CD8-positive, alpha-beta T cell (primary cell): ENCODE measurements at regions of chr19 and their contacts with region 1.

Region 1: GRCh38 chr19:7197760-7198696 is 96.2 kb downstream of the INSR start:
- DNase-seq: peak; percentile 80 to 98 (median 89)
- ATAC-seq: peak; percentile 83
- H3K4me3 ChIP-seq: peak overlapping the region; percentile 67 to 76
- H3K4me3 Mint-ChIP-seq: peak overlapping the region; percentile 90
- H3K27ac ChIP-seq: peak overlapping the region; percentile 73
- H3K27ac Mint-ChIP-seq: peak overlapping the region; percentile 95
- H3K4me1 ChIP-seq: peaks cover 17% of the 10 kb centered on the region
- H3K4me1 Mint-ChIP-seq: peaks cover 14% of the 10 kb centered on the region
- H3K27me3 ChIP-seq: no peaks in the 10 kb centered on the region
- H3K27me3 Mint-ChIP-seq: peaks cover 2% of the 10 kb centered on the region
- CTCF ChIP-seq: no peak

Region 2: DNA sequence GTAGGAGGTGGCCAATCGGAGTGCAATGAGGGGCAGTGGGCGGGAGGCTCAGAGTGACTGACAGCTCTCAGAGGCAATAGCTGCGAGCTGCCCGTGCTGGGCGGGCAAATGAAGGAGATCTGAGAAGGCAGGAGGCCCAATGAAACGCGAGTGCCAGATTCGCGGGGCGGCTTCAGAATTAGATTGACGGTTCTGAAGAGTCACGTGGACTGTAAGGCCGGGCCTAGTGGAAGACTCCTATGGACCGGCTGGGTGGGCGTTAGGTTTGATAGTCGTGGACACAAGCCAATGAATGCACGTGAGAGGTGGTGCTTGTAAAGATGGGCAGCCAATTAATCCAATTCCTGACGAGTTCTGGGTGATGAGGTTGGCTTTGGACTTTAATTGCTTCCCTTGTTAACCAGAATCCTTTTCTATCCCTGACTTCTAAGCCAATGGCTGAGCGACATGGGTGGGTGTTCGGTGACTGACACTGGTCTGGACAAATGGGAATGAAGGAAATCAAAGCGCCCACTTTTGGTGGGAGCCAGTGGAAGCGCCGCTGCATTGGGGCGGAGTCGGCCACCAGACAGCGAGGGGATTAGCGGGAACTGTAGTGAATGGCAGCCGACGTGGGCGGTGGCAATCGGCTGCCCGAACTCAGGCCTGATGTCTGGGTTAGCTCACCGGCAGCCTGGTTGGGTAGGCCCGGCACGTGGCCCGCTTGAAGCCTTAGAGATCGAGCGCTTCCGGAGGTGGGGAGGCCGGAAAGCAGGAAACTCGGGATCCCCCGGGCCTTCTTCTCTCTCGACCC is 772.9 kb before region 1 on chr19:
- CTCF ChIA-PET with region 1: no interaction called
- POLR2A ChIA-PET with region 1: no interaction called
- intact Hi-C with region 1: loop called in 1 of 2 experiments (anchors 10 kb)
- DNase-seq: peak; percentile 97 to 100 (median 98)
- ATAC-seq: peak; percentile 82
- H3K4me3 ChIP-seq: peak overlapping the region; percentile 7 to 48
- H3K4me3 Mint-ChIP-seq: peak overlapping the region; percentile 78
- H3K27ac ChIP-seq: peak overlapping the region; percentile 39 to 92
- H3K27ac Mint-ChIP-seq: peak overlapping the region; percentile 93
- H3K4me1 ChIP-seq: peaks cover 35% of the 10 kb centered on the region
- H3K4me1 Mint-ChIP-seq: peaks cover 37% of the 10 kb centered on the region
- H3K27me3 ChIP-seq: no peaks in the 10 kb centered on the region
- H3K27me3 Mint-ChIP-seq: no peaks in the 10 kb centered on the region
- CTCF ChIP-seq: no peak

Region 3: GRCh38 chr19:7104747-7105447 is 93.1 kb before region 1 on chr19:
- CTCF ChIA-PET with region 1: interaction called, 3 read pairs
- POLR2A ChIA-PET with region 1: no interaction called
- intact Hi-C with region 1: loop called in 1 of 2 experiments (anchors 5 kb)
- DNase-seq: no peak
- ATAC-seq: no peak
- H3K4me3 ChIP-seq: no peak overlapping the region
- H3K4me3 Mint-ChIP-seq: no peak overlapping the region
- H3K27ac ChIP-seq: no peak overlapping the region
- H3K27ac Mint-ChIP-seq: no peak overlapping the region
- H3K4me1 ChIP-seq: peaks cover 8% of the 10 kb centered on the region
- H3K4me1 Mint-ChIP-seq: peaks cover 15% of the 10 kb centered on the region
- H3K27me3 ChIP-seq: no peaks in the 10 kb centered on the region
- H3K27me3 Mint-ChIP-seq: no peaks in the 10 kb centered on the region
- CTCF ChIP-seq: no peak

Region 4: GRCh38 chr19:7348587-7349230 is 150.7 kb after region 1 on chr19 and contains the start of gene ARHGEF18:
- CTCF ChIA-PET with region 1: interaction called, 4 read pairs
- POLR2A ChIA-PET with region 1: interaction called, 6 read pairs
- intact Hi-C with region 1: loop called in 1 of 2 experiments (anchors 5 kb)
- DNase-seq: peak; percentile 14 to 85 (median 68)
- ATAC-seq: peak; percentile 68
- H3K4me3 ChIP-seq: peak within 1 kb of the TSS; percentile 92 to 96
- H3K4me3 Mint-ChIP-seq: peak within 1 kb of the TSS; percentile 90
- H3K27ac ChIP-seq: peak within 1 kb of the TSS; percentile 74 to 83
- H3K27ac Mint-ChIP-seq: peak within 1 kb of the TSS; percentile 96
- H3K4me1 ChIP-seq: peaks cover 62% of the 10 kb centered on the region
- H3K4me1 Mint-ChIP-seq: peaks cover 70% of the 10 kb centered on the region
- H3K27me3 ChIP-seq: no peaks in the 10 kb centered on the region
- H3K27me3 Mint-ChIP-seq: no peaks in the 10 kb centered on the region
- CTCF ChIP-seq: no peak
- total RNA-seq, gene ARHGEF18: 78.8 to 81.0 TPM

Region 5: DNA sequence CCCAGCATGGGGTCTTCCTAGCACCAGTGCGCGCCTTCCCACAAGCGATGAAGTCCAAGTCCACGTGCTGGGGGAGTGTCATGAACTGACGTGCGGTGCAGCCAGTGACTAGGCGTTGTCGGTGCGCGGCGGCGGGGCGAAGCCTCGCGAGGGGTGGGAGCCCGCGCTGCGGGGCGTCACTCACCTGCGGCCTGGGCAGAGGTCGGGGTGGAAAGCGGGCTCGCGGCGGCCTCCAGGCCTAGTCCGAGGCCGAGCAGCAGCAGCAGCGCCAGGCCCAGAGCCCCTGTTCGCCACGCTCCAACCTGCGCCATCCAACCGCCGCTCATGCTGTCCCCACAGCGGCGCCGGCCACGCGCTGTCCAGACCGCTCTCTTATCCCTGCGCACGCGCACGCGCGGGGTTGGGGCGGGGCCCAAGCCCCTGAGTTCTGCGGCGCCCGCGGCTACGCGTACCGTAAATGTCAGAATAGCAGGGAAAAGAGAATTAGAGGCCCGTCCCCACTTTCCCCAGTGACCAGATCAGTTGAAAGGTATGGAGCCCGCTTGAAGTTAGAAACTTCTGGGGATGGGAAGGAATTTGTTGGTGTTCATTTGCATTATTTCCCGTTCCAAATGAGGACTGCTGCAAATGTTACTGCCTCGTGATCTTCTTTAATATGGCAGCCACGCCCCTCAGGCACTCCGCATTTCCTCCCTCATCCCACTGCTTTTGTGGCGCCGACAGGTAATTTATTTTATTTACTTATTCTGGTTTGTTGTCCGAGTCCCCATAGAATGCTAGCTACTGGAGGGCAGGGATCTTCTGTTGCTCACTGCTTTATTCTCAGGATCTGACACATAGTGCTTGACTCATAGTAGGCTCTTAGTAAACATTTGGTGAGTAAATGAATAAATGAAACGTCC is 1110.2 kb after region 1 on chr19 and contains the start of gene CD320:
- CTCF ChIA-PET with region 1: no interaction called
- POLR2A ChIA-PET with region 1: no interaction called
- intact Hi-C with region 1: loop called (anchors 5 kb)
- DNase-seq: peak; percentile 71 to 92 (median 86)
- ATAC-seq: peak; percentile 93
- H3K4me3 ChIP-seq: peak within 1 kb of the TSS; percentile 63 to 64
- H3K4me3 Mint-ChIP-seq: peak within 1 kb of the TSS; percentile 91
- H3K27ac ChIP-seq: peak within 1 kb of the TSS; percentile 64 to 71
- H3K27ac Mint-ChIP-seq: peak within 1 kb of the TSS; percentile 94
- H3K4me1 ChIP-seq: peaks cover 29% of the 10 kb centered on the region
- H3K4me1 Mint-ChIP-seq: peaks cover 31% of the 10 kb centered on the region
- H3K27me3 ChIP-seq: no peaks in the 10 kb centered on the region
- H3K27me3 Mint-ChIP-seq: no peaks in the 10 kb centered on the region
- CTCF ChIP-seq: no peak
- total RNA-seq, gene CD320: 15.7 to 19.1 TPM